Caco-2 (cell line): ENCODE measurements at regions of chr6 and their contacts with region 1.

Region 1: GRCh38 chr6:119078376-119079282 is at the start of gene FAM184A:
- DNase-seq: peak; percentile 74 to 86
- H3K4me3 ChIP-seq: peak within 1 kb of the TSS; percentile 93
- H3K4me3 Mint-ChIP-seq: peak within 1 kb of the TSS; percentile 89
- H3K27ac Mint-ChIP-seq: peak within 1 kb of the TSS; percentile 82
- H3K4me1 ChIP-seq: peaks cover 10% of the 10 kb centered on the region; the same call in 1 of the 2 replicates
- H3K4me1 Mint-ChIP-seq: peaks cover 7% of the 10 kb centered on the region
- H3K27me3 ChIP-seq: no peaks in the 10 kb centered on the region
- H3K27me3 Mint-ChIP-seq: no peaks in the 10 kb centered on the region
- CTCF ChIP-seq: peak; percentile 23 to 64
- total RNA-seq, gene FAM184A: 10.8 and 11.2 TPM in 2 replicates

Region 2: DNA sequence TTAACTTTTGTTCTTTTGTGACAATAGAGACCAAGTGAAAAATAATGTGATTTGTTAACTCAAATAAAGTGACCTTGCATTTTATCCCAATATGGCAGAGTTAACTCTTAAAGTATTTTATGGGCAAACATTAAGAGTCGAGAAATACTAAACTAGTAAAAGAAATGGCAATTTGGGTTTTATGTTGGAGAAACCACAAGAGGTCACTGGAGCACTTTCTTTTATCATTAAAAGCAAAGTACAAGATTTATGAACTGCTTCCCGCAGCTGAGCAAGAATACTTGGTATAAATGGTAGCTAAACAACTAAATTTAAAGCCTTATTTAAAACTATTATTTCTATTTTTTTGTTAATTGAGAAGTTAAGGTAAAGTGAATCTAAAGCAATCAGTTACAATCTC is 110.2 kb before region 1 on chr6:
- CTCF ChIA-PET with region 1: interaction called, 7 read pairs
- POLR2A ChIA-PET with region 1: no interaction called
- intact Hi-C with region 1: loop called (anchors 10 kb)
- DNase-seq: peak in 1 of 2 experiments; percentile 12
- H3K4me3 ChIP-seq: no peak overlapping the region
- H3K4me3 Mint-ChIP-seq: no peak overlapping the region
- H3K27ac Mint-ChIP-seq: no peak overlapping the region
- H3K4me1 ChIP-seq: 0 out of 2 replicates have a peak, but pooled peaks cover 7% of the 10 kb centered on the region
- H3K4me1 Mint-ChIP-seq: no peaks in the 10 kb centered on the region
- H3K27me3 ChIP-seq: no peaks in the 10 kb centered on the region
- H3K27me3 Mint-ChIP-seq: no peaks in the 10 kb centered on the region
- CTCF ChIP-seq: peak; percentile 29 to 35